Dendritic cell treated with granulocyte-macrophage colony-stimulating factor and Interleukin-4, amounts not matched to agents 40 ng/mL and 50 ng/mL, for 4 days (primary cell): ENCODE measurements at regions of chr10 and their contacts with region 1.

Region 1: GRCh38 chr10:17910125-17910789 is 41.5 kb upstream of the SLC39A12 start:
- H3K4me3 Mint-ChIP-seq: no peak overlapping the region
- H3K27ac Mint-ChIP-seq: no peak overlapping the region
- H3K4me1 Mint-ChIP-seq: peaks cover 13% of the 10 kb centered on the region
- H3K27me3 Mint-ChIP-seq: no peaks in the 10 kb centered on the region

Region 2: GRCh38 chr10:17872191-17873091 is 37.8 kb before region 1 on chr10:
- intact Hi-C with region 1: loop called (anchors 5 kb)
- H3K4me3 Mint-ChIP-seq: no peak overlapping the region
- H3K27ac Mint-ChIP-seq: peak overlapping the region; percentile 63
- H3K4me1 Mint-ChIP-seq: peaks cover 56% of the 10 kb centered on the region
- H3K27me3 Mint-ChIP-seq: no peaks in the 10 kb centered on the region

Region 3: DNA sequence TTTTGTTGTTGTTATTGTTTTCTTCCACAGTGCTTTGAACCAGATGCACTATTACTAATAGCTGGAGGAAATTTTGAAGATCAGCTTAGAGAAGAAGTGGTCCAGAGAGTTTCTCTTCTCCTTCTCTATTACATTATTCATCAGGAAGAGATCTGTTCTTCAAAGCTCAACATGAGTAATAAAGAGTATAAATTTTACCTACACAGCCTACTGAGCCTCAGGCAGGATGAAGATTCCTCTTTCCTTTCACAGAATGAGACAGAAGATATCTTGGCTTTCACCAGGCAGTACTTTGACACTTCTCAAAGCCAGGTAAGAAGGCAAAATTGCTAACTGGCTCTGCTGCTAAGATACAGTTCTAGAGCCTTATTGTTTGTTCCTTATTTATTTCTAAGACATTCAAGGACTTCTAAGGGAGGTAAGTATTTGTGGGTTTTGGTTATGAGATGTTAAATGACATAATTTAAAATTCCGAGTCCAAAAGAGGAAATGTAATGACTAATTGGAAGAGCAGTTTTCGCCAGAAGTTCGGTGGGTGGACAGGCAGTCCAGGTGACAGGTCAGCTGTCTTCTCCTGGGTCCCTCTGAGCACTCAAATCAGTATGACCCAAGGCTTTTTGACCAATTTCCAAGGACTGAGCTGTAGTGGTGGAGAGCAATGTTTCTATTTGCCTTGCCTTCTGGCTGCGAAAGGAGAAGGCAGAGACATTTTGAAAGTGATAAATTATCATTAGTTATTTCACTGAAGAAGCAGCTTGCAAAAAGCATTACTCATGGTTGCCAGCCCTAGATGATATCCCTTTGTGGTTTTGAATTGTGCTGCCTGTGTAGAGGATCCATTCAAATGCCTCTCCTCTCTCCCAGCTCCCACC is 51.5 kb after region 1 on chr10:
- intact Hi-C with region 1: no loop called
- H3K4me3 Mint-ChIP-seq: no peak overlapping the region
- H3K27ac Mint-ChIP-seq: no peak overlapping the region
- H3K4me1 Mint-ChIP-seq: peaks cover 7% of the 10 kb centered on the region
- H3K27me3 Mint-ChIP-seq: peaks cover 5% of the 10 kb centered on the region

Region 4: GRCh38 chr10:17974505-17974904 is 64.2 kb after region 1 on chr10:
- intact Hi-C with region 1: no loop called
- H3K4me3 Mint-ChIP-seq: no peak overlapping the region
- H3K27ac Mint-ChIP-seq: no peak overlapping the region
- H3K4me1 Mint-ChIP-seq: no peaks in the 10 kb centered on the region
- H3K27me3 Mint-ChIP-seq: peaks cover 2% of the 10 kb centered on the region

Region 5: DNA sequence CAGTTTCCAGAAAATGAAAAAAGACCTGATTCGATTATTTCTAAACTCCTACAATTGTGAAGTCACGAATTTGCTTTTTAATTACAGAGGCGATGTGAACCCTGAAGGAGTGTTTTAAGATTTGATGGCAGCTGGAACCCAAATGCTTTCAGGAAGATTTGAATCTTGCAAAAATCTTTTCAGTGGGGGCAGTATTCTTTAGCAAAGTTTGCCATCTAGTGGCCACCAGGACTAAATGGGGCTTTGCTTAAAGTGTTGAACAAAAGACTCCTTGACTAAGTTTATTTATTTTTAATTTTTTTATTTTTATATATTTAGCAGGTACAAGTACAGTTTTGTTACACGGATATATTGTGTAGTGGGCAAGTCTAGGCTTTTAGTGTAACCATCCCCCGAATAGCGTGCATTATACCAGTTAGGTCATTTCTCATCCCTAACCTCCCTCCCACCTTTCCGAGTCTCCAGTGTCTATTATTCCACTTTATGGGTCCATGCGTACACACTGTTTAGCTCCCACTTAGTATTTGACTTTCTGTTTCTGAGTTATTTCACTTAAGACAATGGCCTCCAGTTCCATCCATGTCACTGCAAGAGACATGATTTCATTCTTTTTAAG is 328.7 kb after region 1 on chr10:
- intact Hi-C with region 1: loop called (anchors 5 kb)
- H3K4me3 Mint-ChIP-seq: no peak overlapping the region
- H3K27ac Mint-ChIP-seq: no peak overlapping the region
- H3K4me1 Mint-ChIP-seq: peaks cover 16% of the 10 kb centered on the region
- H3K27me3 Mint-ChIP-seq: peaks cover 6% of the 10 kb centered on the region

Region 6: GRCh38 chr10:18312374-18313139 is 402.3 kb after region 1 on chr10:
- intact Hi-C with region 1: loop called (anchors 5 kb)
- H3K4me3 Mint-ChIP-seq: no peak overlapping the region
- H3K27ac Mint-ChIP-seq: no peak overlapping the region
- H3K4me1 Mint-ChIP-seq: no peaks in the 10 kb centered on the region
- H3K27me3 Mint-ChIP-seq: peaks cover 3% of the 10 kb centered on the region

Region 7: DNA sequence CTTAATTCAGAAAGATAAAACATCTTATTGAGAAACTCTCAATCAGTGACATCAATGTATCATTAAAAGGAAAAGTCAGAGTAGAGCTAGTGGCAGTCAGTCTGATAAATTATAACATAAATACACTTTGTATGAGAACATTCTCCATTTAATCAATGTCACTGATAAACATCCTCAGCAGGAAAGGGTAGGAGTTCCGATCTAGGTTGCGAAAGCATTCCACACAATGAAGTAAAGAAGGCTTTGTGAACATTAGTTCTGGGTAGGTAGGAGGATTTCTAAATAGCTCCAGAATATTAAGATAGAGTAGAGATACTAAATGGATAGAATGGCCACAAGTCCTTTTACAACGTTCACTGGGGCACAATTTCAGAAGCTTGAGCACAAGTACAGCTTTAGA is 958.7 kb after region 1 on chr10:
- intact Hi-C with region 1: no loop called
- H3K4me3 Mint-ChIP-seq: no peak overlapping the region
- H3K27ac Mint-ChIP-seq: no peak overlapping the region
- H3K4me1 Mint-ChIP-seq: no peaks in the 10 kb centered on the region
- H3K27me3 Mint-ChIP-seq: no peaks in the 10 kb centered on the region